K562 (cell line): ENCODE measurements at regions of chr15 and their contacts with region 1.

Region 1: DNA sequence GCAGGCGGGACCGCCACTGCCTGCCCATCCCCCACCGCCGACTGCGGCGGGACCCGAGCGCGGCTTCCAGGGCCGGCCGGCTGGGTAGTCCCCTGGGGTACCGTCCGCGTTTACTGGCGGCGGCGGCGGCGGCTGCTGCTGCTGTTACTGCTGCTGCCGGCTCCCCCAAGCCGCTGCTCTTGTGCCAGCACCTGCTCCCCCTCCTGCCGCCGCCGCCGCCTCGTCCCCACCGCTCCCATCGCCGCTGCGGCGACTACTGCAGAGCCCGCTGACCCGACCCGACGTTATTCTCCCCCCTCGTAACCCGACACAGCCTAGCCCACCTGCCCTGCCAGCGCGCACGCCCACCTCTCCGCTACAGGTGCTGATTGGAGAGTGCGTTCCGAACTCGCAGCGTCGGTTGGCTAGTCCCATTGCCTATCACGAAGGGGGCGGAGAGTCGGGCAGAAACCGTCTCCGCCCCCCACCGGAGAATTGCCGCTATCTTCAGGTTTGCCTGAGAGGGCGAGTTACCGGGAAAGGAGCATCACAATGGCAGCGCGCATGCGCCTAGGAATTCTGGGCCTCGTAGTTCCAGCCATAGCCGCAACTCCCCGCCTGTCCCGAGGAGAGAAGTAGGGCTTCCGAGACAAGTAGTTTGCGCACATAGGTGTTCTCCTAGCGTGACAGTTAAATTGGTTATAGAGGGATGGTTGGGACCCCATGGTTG is at the start of gene TTBK2:
- DNase-seq: peak; percentile 97 to 99 (median 98)
- ATAC-seq: peak; percentile 99
- H3K4me3 ChIP-seq: peak within 1 kb of the TSS; percentile 78
- H3K27ac ChIP-seq: peak within 1 kb of the TSS; percentile 52
- H3K4me1 ChIP-seq: peaks cover 5 to 11% of the 10 kb centered on the region in 2 experiments
- H3K27me3 ChIP-seq: no peaks in the 10 kb centered on the region
- CTCF ChIP-seq: 0 out of 6 replicates have a peak, but pooled peaks of 2 of the 3 experiments have one; percentile 16 to 17
- EP300 ChIP-seq: peak; percentile 33; the same call in 1 of the 2 replicates
- POLR2A ChIP-seq: peak; percentile 73
- RAD21 ChIP-seq: no peak
- polyA plus RNA-seq, gene TTBK2: 0.89 to 1.2 TPM

Region 2: GRCh38 chr15:42736793-42737528 is 183.7 kb before region 1 on chr15 and contains the start of gene CDAN1:
- CTCF ChIA-PET with region 1: interaction called, 5 read pairs
- POLR2A ChIA-PET with region 1: interaction called, 3 read pairs
- in situ Hi-C with region 1: no loop called
- intact Hi-C with region 1: loop called (anchors 2 kb)
- DNase-seq: peak; percentile 93 to 99 (median 99)
- ATAC-seq: peak; percentile 97
- H3K4me3 ChIP-seq: peak within 1 kb of the TSS; percentile 96
- H3K27ac ChIP-seq: peak within 1 kb of the TSS; percentile 89
- H3K4me1 ChIP-seq: peaks cover 5 to 26% of the 10 kb centered on the region in 2 experiments; a peak in 4 of 5 replicates
- H3K27me3 ChIP-seq: no peaks in the 10 kb centered on the region
- CTCF ChIP-seq: no peak; a peak in 1 of 6 replicates
- EP300 ChIP-seq: peak; percentile 44
- POLR2A ChIP-seq: peak; percentile 84
- RAD21 ChIP-seq: no peak; a peak in 1 of 4 replicates
- polyA plus RNA-seq, gene CDAN1: 1.6 to 2.7 TPM

Region 3: GRCh38 chr15:42800731-42801474 is 119.8 kb before region 1 on chr15:
- CTCF ChIA-PET with region 1: interaction called, 19 read pairs
- POLR2A ChIA-PET with region 1: no interaction called
- in situ Hi-C with region 1: no loop called
- intact Hi-C with region 1: no loop called
- DNase-seq: peak in 1 of 4 experiments; percentile 21
- ATAC-seq: no peak
- H3K4me3 ChIP-seq: no peak overlapping the region
- H3K27ac ChIP-seq: no peak overlapping the region
- H3K4me1 ChIP-seq: peaks cover 0 to 4% of the 10 kb centered on the region in 2 experiments; a peak in 1 of 5 replicates
- H3K27me3 ChIP-seq: no peaks in the 10 kb centered on the region
- CTCF ChIP-seq: peak; percentile 27 to 44 (median 42); a peak in 5 of 6 replicates
- EP300 ChIP-seq: no peak
- POLR2A ChIP-seq: no peak
- RAD21 ChIP-seq: peak in 1 of 2 experiments; percentile 36; a peak in 2 of 4 replicates

Region 4: DNA sequence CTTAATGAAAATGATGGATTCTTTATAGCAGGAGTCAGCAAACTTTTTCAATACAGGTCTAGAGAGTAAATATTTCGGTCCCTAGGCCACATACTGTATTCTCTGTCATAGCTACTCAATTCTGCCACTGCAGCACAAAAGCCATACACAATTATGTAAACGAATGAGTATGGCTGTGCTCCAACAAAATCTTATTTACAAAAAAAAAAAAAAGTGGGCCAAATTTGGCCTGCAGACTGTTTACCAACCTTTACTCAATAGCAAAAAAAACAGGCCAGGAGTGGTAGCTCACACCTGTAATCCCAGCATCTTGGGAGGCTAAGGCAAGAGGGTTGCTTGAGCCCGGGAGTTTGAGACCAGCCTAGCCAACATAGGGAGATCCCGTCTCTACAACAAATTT is 41.2 kb before region 1 on chr15:
- CTCF ChIA-PET with region 1: no interaction called
- POLR2A ChIA-PET with region 1: no interaction called
- in situ Hi-C with region 1: no loop called
- intact Hi-C with region 1: loop called (anchors 5 kb)
- DNase-seq: no peak
- ATAC-seq: no peak
- H3K4me3 ChIP-seq: no peak overlapping the region
- H3K27ac ChIP-seq: no peak overlapping the region
- H3K4me1 ChIP-seq: peaks cover 0 to 2% of the 10 kb centered on the region in 2 experiments; a peak in 1 of 5 replicates
- H3K27me3 ChIP-seq: no peaks in the 10 kb centered on the region
- CTCF ChIP-seq: no peak
- EP300 ChIP-seq: no peak
- POLR2A ChIP-seq: no peak
- RAD21 ChIP-seq: no peak

Region 5: GRCh38 chr15:43510200-43511011 is 589.7 kb after region 1 on chr15:
- CTCF ChIA-PET with region 1: no interaction called
- POLR2A ChIA-PET with region 1: no interaction called
- in situ Hi-C with region 1: no loop called
- intact Hi-C with region 1: no loop called
- DNase-seq: peak; percentile 95 to 99 (median 96)
- ATAC-seq: peak; percentile 96
- H3K4me3 ChIP-seq: peak overlapping the region; percentile 58
- H3K27ac ChIP-seq: peak overlapping the region; percentile 93
- H3K4me1 ChIP-seq: peaks cover 17 to 60% of the 10 kb centered on the region in 2 experiments
- H3K27me3 ChIP-seq: no peaks in the 10 kb centered on the region
- CTCF ChIP-seq: peak; percentile 38 to 41 (median 40); a peak in 5 of 6 replicates
- EP300 ChIP-seq: no peak; the same call in 1 of the 2 replicates
- POLR2A ChIP-seq: peak; percentile 86
- RAD21 ChIP-seq: peak in 1 of 2 experiments; percentile 21; a peak in 1 of 4 replicates